CD8-positive, alpha-beta T cell (primary cell): ENCODE measurements at regions of chr17 and their contacts with region 1.

Region 1: GRCh38 chr17:18225121-18225566 is 291 bp upstream of the LLGL1 start:
- DNase-seq: peak; percentile 92 to 98 (median 96)
- ATAC-seq: peak; percentile 98
- H3K4me3 ChIP-seq: peak overlapping the region; percentile 39 to 43
- H3K4me3 Mint-ChIP-seq: peak overlapping the region; percentile 63
- H3K27ac ChIP-seq: peak overlapping the region in 1 of 2 experiments; percentile 31
- H3K27ac Mint-ChIP-seq: no peak overlapping the region
- H3K4me1 ChIP-seq: peaks cover 17% of the 10 kb centered on the region
- H3K4me1 Mint-ChIP-seq: peaks cover 29% of the 10 kb centered on the region
- H3K27me3 ChIP-seq: no peaks in the 10 kb centered on the region
- H3K27me3 Mint-ChIP-seq: no peaks in the 10 kb centered on the region
- CTCF ChIP-seq: no peak

Region 2: DNA sequence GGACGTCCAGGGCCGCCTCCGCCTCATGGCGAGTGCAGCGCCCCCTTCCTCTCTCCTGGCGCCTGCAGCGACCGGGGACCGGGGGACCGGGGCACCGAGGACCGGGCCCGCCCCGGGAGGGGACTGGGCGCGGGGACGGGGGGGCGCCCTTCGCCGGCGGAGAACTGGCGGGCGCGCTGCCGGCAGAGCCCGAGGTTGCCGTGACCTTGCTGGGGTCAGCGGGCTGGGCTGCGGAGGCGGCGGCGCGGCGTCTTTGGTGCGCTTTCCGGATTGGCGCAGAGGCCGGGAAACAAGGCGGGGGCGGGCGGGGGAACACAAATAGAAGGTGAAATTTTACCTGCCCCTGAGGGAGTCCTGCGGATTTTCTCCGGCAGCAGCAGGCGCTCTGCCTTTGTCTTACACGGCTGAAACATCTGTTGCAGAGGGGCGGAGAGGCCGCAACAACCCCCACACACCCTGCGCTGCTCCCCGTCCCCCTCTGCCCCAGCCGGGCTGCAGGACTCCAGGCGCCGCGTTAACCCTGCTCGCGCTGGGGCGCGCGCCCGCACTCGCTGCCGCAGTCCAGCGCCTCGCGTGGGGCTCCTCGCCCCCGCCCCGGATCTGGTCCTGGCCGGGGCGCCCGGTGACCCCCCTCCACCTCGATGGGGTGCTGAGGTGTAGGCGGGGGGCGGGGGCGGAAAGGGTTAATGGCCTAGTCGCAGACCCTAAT is 441.9 kb before region 1 on chr17:
- CTCF ChIA-PET with region 1: no interaction called
- POLR2A ChIA-PET with region 1: no interaction called
- intact Hi-C with region 1: loop called in 1 of 2 experiments (anchors 10 kb)
- DNase-seq: peak; percentile 24 to 79 (median 65)
- ATAC-seq: peak; percentile 58
- H3K4me3 ChIP-seq: peak overlapping the region; percentile 50 to 54
- H3K4me3 Mint-ChIP-seq: peak overlapping the region; percentile 85
- H3K27ac ChIP-seq: peak overlapping the region in 1 of 2 experiments; percentile 36
- H3K27ac Mint-ChIP-seq: peak overlapping the region; percentile 41
- H3K4me1 ChIP-seq: peaks cover 30% of the 10 kb centered on the region
- H3K4me1 Mint-ChIP-seq: peaks cover 30% of the 10 kb centered on the region
- H3K27me3 ChIP-seq: peaks cover 0 to 4% of the 10 kb centered on the region in 2 experiments
- H3K27me3 Mint-ChIP-seq: no peaks in the 10 kb centered on the region
- CTCF ChIP-seq: peak; percentile 26

Region 3: DNA sequence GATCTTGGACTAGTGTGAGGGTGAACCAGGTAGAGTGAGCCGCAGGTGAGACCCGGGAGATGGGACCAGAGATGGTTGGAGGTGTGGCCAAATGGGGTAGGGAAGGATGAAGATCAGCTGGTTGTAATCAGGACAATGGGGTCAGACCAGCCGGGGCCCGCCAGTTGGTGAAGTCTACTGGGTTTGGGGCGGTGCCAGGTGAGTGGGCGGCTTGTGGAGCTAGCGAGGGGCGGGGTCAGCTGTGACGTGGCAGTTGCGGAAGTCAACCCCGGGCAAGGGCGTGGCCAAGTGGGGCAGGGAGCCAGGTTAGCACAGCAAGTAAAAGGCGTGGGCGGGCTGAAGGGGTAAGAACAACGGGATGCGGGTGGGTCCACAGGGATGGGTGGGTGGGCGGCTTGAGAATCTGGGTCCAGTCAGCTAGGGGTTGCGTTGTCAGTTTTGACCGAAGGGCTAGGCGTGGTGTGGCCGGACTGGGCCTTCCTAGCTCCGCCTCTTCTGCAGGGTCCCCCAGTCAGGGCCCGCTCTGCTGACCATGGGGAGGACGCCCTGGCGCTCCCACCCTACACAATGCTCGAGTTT is 67.0 kb before region 1 on chr17:
- CTCF ChIA-PET with region 1: interaction called, 4 read pairs
- POLR2A ChIA-PET with region 1: no interaction called
- intact Hi-C with region 1: loop called in 1 of 2 experiments (anchors 1 kb)
- DNase-seq: peak; percentile 88 to 96 (median 94)
- ATAC-seq: peak; percentile 91
- H3K4me3 ChIP-seq: peak overlapping the region; percentile 45 to 61
- H3K4me3 Mint-ChIP-seq: peak overlapping the region; percentile 85
- H3K27ac ChIP-seq: peak overlapping the region; percentile 47 to 51
- H3K27ac Mint-ChIP-seq: peak overlapping the region; percentile 88
- H3K4me1 ChIP-seq: peaks cover 13% of the 10 kb centered on the region
- H3K4me1 Mint-ChIP-seq: peaks cover 19% of the 10 kb centered on the region
- H3K27me3 ChIP-seq: no peaks in the 10 kb centered on the region
- H3K27me3 Mint-ChIP-seq: no peaks in the 10 kb centered on the region
- CTCF ChIP-seq: no peak

Region 4: DNA sequence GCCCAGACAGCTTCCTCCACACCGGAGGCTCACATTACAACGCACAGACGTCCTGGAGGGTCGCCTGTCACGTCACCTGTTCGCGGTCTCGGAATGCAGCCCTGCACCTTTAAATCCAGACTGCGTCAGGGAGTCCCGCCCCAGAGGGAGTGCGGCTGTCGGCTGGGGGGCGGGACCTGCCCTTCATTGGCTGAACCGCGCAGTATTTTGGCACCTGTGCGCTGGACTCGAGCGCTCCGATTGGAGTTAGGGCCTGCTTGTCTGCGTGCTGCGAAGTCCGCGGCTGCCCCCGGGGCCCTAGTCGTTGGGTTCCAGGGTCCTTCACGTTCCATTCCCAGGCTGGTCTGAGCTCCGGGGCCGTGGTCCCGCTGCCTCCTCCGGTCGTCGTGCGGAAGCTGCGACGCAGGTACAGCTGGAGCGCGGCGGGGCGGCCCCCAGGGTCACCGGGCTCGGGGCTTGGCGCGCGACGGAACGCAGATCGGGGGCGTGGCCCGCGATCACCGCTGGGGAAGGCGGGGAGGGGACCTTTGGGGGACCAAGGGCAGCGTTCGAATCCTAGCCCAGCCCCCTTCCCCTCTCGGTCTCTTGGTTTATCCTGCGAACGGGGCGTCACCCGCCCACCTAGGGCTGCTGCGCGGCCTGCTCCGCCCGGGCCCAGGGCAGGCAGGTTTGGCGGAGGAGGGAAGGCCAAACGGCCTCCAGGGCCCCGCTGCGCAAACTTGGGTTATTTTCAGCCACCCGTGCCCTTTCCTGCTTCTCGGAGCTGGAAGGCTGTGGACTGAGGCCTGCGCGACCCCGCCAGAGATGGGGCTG is 35.4 kb after region 1 on chr17 and contains the start of gene MIEF2:
- CTCF ChIA-PET with region 1: interaction called, 3 read pairs
- POLR2A ChIA-PET with region 1: no interaction called
- intact Hi-C with region 1: loop called (anchors 1 kb)
- DNase-seq: peak; percentile 83 to 95 (median 93)
- ATAC-seq: peak; percentile 87
- H3K4me3 ChIP-seq: peak within 1 kb of the TSS; percentile 62 to 78
- H3K4me3 Mint-ChIP-seq: peak within 1 kb of the TSS; percentile 78
- H3K27ac ChIP-seq: peak within 1 kb of the TSS; percentile 83 to 93
- H3K27ac Mint-ChIP-seq: peak within 1 kb of the TSS; percentile 92
- H3K4me1 ChIP-seq: peaks cover 47% of the 10 kb centered on the region
- H3K4me1 Mint-ChIP-seq: peaks cover 43% of the 10 kb centered on the region
- H3K27me3 ChIP-seq: no peaks in the 10 kb centered on the region
- H3K27me3 Mint-ChIP-seq: no peaks in the 10 kb centered on the region
- CTCF ChIP-seq: no peak
- total RNA-seq, gene MIEF2: 9.6 to 11.0 TPM

Region 5: GRCh38 chr17:18314731-18315561 is 89.8 kb after region 1 on chr17 and contains the starts of genes SMCR8 and TOP3A:
- CTCF ChIA-PET with region 1: no interaction called
- POLR2A ChIA-PET with region 1: no interaction called
- intact Hi-C with region 1: loop called (anchors 1 kb)
- DNase-seq: peak; percentile 95 to 99 (median 97)
- ATAC-seq: peak; percentile 95
- H3K4me3 ChIP-seq: peak within 1 kb of the TSS; percentile 88 to 93
- H3K4me3 Mint-ChIP-seq: peak within 1 kb of the TSS; percentile 90
- H3K27ac ChIP-seq: peak within 1 kb of the TSS; percentile 98 to 99
- H3K27ac Mint-ChIP-seq: peak within 1 kb of the TSS; percentile 97
- H3K4me1 ChIP-seq: peaks cover 67% of the 10 kb centered on the region
- H3K4me1 Mint-ChIP-seq: peaks cover 76% of the 10 kb centered on the region
- H3K27me3 ChIP-seq: no peaks in the 10 kb centered on the region
- H3K27me3 Mint-ChIP-seq: no peaks in the 10 kb centered on the region
- CTCF ChIP-seq: no peak
- total RNA-seq, gene SMCR8: 51.9 to 53.1 TPM
- total RNA-seq, gene TOP3A: 28.8 to 30.9 TPM

Region 6: DNA sequence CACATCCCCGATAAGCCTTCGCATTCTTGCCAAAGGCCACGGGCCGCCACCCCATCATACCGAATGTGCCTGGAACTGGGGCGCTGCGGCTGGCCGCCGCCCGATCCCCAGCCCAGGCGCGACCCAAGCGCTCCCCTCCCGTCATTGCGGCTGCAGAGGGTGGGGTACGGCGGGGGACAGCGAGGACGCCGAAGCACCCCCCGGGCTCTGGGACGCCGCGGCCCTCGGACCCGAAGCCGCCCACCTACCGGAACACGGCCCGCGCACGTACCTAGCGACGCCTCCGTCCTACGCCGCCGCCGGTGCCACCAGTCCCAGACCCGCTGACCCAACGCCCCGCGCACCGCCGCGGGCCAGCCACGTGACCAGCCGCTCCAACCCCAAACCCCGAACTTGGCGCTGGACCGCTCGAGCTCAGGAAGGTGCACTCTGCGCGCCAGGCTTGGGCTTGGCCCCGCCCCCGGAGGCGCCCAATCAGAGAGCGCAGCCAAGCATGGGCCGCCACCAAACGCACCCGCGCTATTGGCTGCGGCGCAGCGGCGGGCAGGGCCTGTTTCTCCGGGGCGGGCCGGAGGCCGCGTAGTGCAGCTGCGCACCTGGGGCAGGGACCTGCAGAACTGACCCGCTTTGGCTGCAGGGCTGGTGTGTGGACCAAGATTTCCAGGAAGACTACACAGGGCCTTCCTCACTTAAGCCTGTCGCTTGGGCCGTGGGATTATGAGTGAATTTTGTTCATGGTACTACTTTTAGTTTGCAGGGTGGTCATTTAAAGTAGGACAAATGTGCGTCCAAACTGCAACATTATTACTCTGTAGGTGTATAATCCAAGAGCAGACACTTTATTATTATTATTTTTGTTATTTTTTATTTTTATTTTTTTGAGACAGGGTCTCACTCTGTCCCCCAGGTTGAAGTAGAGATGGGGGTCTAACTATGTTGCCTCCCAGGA is 138.2 kb after region 1 on chr17 and contains the start of gene SHMT1:
- CTCF ChIA-PET with region 1: no interaction called
- POLR2A ChIA-PET with region 1: no interaction called
- intact Hi-C with region 1: loop called (anchors 1 kb)
- DNase-seq: peak; percentile 73 to 95 (median 89)
- ATAC-seq: peak; percentile 100
- H3K4me3 ChIP-seq: peak within 1 kb of the TSS; percentile 75 to 93
- H3K4me3 Mint-ChIP-seq: peak within 1 kb of the TSS; percentile 93
- H3K27ac ChIP-seq: peak within 1 kb of the TSS; percentile 45 to 65
- H3K27ac Mint-ChIP-seq: peak within 1 kb of the TSS; percentile 72
- H3K4me1 ChIP-seq: peaks cover 9% of the 10 kb centered on the region
- H3K4me1 Mint-ChIP-seq: peaks cover 20% of the 10 kb centered on the region
- H3K27me3 ChIP-seq: no peaks in the 10 kb centered on the region
- H3K27me3 Mint-ChIP-seq: no peaks in the 10 kb centered on the region
- CTCF ChIP-seq: no peak
- total RNA-seq, gene SHMT1: 5.7 to 6.1 TPM